ENCODE measurements at regions of chr12 and their contacts with region 1.

Region 1: GRCh38 chr12:53543539-53543938 is 36.3 kb upstream of the NPFF start:
- DNase-seq: no peak

Region 2: GRCh38 chr12:53500776-53501614 is 42.5 kb before region 1 on chr12 and contains the start of gene TARBP2:
- intact Hi-C with region 1: no loop called
- DNase-seq: peak; percentile 99
- total RNA-seq, gene TARBP2: 11.6 TPM

Region 3: DNA sequence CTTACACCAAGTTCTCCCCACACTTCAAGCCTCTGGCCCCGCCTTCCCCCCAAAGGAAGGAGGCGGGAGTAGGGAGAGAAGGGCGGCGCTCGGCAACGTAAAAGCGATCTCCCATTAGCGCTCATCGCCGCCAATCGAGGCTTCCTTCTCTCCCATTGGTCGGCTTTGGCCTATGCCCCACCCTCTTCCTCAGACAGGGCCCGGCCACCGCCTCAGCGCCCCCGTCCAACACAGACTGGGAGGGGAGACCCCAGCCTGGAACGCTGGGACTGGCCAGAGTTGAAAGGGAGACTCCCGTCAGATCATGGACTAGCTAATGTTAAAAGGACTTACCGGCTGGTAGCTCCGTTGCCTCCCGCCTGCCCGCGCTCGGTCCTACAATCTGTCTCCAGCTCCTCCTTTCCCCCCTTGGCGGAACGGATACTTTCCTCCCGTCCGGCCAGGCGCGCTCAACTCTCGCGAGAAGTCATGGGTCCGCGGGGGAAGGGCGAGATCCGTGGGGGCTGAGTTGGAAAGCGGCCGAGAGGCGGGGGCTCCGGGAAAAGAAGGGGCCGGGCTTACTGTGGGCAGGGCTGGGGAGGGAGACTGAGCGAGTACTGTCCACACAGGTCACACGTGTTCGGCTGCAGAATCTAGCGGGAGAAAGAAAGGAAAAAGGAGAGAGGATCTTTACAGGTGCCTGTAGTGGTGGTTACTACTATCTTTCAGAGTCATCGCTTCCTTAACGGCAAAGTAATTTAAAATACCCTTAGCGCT is 82.6 kb after region 1 on chr12 and contains the start of gene ATF7:
- intact Hi-C with region 1: loop called (anchors 5 kb)
- DNase-seq: peak; percentile 99
- total RNA-seq, gene ATF7: 33.5 TPM

Region 4: DNA sequence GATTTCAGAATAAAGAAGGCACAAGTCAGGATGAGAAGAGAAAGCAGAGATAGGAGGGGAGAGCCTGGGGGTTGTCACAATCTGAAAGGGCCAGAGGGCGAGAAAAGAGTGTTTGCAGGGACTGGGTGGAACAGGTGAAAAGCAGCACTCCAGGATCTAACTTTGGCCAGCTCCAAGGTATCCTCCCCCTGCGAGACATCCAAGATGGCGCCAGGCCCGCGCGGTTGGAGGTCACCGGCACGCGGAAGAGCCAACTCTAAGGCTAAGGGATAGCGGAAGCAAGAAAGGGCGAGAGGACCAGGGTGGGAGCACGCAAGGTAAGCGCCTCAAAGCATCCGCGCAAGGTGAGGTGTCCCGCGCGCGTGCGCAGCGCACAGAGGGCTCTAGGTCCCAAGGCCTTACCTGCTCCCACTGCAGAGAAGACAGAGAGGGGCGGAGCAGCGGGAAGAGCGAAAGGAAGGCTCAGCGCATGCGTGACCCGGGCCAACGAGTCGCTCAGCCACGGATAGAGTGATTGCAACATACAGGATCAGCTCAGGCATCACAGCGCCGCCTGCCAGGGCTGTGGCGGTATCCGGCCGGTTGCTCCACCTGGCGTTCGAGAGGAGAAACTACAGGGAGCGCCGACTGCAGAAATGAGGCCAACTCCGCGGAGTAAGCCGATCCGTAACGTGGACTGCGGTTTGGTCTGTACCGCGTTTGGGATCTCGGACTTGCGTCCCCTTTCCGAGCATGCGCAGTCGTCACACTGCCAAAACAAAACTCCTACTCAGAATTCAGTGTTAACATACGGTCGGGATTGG is 132.3 kb after region 1 on chr12 and contains the start of gene ATP5MC2:
- intact Hi-C with region 1: loop called (anchors 1 kb)
- DNase-seq: peak; percentile 99
- total RNA-seq, gene ATP5MC2: 365 TPM

Region 5: DNA sequence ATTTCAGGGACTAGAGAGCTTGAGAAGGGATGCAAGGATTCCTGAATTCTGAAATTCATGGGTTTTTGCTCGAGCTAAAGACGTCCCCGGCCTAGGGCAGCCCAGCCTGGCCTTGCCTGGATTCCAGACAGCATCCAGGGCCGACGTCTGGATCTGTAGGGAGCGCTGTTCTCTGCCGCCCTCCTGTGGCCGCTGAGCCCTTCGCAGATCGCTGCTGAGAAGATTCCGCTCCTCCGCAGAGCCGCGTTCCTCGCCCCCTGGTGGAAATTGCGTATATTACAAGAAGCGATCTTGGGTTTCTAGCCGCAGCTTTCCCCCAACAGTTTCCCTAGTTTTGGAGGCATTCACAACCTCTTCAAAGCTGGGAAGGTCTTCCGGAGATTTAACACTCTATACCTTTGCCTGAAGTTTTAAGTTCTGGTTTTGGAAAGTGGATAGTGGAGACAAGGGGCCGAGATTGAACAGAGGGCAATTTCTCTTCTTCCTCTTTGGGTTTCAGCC is 203.1 kb after region 1 on chr12:
- intact Hi-C with region 1: loop called (anchors 10 kb)
- DNase-seq: peak; percentile 97